ENCODE measurements at regions of chr11 and their contacts with region 1.

Region 1: DNA sequence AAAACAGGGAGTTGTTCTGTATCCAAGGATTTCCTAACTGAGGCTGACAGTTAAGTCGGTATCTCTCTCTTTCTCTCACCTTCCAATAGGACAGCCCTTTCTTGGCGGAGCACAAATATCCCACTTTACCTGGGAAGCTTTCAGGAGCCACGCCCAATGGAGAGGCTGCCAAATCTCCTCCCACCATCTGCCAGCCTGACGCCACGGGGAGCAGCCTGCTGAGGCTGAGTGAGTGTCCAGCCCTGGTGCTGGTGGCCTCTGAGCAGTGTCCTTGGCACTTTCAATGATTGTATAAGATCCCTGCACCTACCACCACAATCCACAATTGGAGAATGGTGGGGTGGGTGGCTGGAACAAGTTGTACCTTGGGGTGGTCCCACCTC is 33.7 kb downstream of the CYB5R2 start:
- DNase-seq: peak; percentile 82 to 94 (median 90)
- ATAC-seq: peak; percentile 95
- H3K4me3 ChIP-seq: no peak overlapping the region
- H3K4me1 ChIP-seq: peaks cover 26% of the 10 kb centered on the region
- CTCF ChIP-seq: no peak

Region 2: DNA sequence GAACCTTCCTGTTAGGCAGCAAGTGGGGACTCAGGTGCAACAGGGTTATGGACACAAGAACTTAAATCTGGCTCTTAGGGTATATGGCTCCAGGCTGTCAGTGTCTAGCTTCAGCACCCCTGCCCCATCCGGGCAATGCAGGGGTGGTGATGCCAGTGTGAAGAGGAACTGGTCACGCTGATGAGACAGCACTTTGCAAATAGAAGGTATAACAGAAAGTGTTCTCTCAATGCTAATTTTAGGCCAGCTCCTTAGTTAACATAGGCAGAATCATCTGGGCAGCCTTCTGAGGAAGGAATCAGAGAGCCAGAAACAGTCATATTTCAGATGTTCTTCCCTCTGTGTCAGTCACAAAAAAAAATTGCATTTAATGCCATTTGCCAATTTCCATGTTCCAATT is 346.7 kb before region 1 on chr11:
- intact Hi-C with region 1: no loop called
- DNase-seq: no peak
- ATAC-seq: no peak
- H3K4me3 ChIP-seq: no peak overlapping the region
- H3K4me1 ChIP-seq: no peaks in the 10 kb centered on the region
- CTCF ChIP-seq: no peak

Region 3: GRCh38 chr11:7559398-7560283 is 80.0 kb before region 1 on chr11:
- intact Hi-C with region 1: loop called in 1 of 2 experiments (anchors 10 kb)
- DNase-seq: no peak
- ATAC-seq: no peak
- H3K4me3 ChIP-seq: no peak overlapping the region
- H3K4me1 ChIP-seq: peaks cover 17% of the 10 kb centered on the region
- CTCF ChIP-seq: no peak

Region 4: GRCh38 chr11:7612661-7613393 is 26.8 kb before region 1 on chr11:
- intact Hi-C with region 1: loop called in 1 of 2 experiments (anchors 1 kb)
- DNase-seq: no peak
- ATAC-seq: peak; percentile 28
- H3K4me3 ChIP-seq: no peak overlapping the region
- H3K4me1 ChIP-seq: peaks cover 41% of the 10 kb centered on the region
- CTCF ChIP-seq: no peak

Region 5: GRCh38 chr11:7696424-7696823 is 56.8 kb after region 1 on chr11:
- intact Hi-C with region 1: no loop called
- DNase-seq: no peak
- ATAC-seq: no peak
- H3K4me3 ChIP-seq: no peak overlapping the region
- H3K4me1 ChIP-seq: no peaks in the 10 kb centered on the region
- CTCF ChIP-seq: no peak

Measured in mucosa of descending colon (tissue), 3 donors.